Posterior cingulate gyrus (tissue), 11 donors: ENCODE measurements at regions of chr11 and their contacts with region 1.

Region 1: DNA sequence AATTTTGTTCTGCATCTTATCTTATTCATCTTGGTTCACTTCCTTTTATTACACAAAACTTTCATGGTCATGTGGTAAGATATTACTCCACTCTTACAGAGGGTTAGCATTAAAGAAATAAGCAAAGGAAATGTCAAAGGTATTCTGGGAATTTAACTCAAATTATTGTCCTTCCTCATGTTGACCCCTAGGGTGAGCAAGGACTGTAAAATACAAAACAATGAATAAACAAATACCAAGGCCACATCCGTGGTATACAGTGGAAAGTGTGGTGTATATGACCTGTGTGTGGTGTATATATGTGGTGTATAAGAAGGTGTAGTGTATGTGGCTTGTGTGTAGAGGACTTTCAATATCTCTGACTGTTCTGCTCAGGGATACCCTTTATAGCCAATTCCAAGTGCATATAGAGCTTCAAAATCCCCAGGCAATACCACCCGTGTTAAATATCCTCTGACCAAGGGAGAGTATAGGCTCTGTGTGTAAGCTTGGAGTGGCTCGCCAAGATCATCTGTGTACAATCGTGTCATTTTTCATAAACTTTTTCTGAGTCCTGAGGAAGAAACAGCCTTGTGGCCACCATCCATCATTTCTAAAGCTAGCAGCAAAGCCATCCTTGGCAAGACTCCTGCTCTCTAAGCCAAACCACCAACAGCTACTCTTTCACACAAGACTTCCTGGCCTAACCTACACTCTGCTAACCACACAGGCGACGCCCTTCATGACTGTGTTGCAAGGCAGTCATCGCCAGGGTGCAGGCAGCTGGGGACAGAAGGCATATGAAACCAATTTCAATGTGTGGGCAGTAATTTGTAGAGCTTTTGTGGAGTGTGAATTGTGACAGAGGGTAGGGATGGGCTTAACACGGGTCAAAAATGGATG is 548.0 kb downstream of the ETS1 start:
- DNase-seq: peak in 1 of 10 donors; percentile 62

Region 2: GRCh38 chr11:128135451-128135850 is 96.1 kb after region 1 on chr11:
- intact Hi-C with region 1: no loop called
- DNase-seq: no peak

Region 3: GRCh38 chr11:128157423-128158298 is 118.3 kb after region 1 on chr11:
- intact Hi-C with region 1: loop called (anchors 5 kb)
- DNase-seq: peak in 1 of 10 donors; percentile 28